Right ventricle myocardium inferior (tissue), 1 donor: ENCODE measurements at regions of chr14 and their contacts with region 1.

Region 1: GRCh38 chr14:103546652-103547454 is 15.6 kb downstream of the BAG5 start:
- DNase-seq: peak; percentile 89
- ATAC-seq: no peak

Region 2: DNA sequence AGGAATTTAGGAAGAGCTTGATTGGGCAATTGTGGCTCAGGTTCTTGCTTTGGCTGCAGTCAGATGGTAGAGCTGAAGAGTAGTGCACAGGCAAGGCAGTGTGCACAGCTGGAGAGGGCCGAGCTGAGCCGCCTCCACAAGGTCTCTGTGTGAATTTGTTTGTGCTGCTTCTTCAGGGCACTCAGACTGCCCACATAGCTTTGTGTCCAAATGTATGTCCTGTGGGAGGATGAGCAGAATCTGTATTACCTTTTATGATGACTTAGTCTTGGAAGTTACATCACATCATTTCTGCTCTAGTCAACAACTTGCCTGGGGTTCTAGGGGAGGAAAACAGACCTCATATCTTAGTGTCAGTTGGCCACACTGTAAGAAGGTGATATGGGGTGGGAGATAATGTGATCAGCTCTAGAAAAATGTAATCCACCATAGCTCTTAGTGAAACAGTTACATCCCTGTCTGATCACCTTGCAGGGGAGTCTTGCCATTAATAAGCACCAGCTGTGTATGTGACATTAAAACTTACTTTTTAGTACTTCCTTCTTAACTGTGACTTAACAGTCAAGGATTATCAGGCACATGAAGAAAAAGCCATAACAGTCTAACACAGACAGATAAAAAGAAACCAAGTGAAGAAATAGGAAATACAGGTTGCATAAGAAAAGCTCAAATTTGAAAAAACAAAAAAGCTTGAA is 901.0 kb before region 1 on chr14:
- intact Hi-C with region 1: no loop called
- DNase-seq: no peak
- ATAC-seq: no peak

Region 3: DNA sequence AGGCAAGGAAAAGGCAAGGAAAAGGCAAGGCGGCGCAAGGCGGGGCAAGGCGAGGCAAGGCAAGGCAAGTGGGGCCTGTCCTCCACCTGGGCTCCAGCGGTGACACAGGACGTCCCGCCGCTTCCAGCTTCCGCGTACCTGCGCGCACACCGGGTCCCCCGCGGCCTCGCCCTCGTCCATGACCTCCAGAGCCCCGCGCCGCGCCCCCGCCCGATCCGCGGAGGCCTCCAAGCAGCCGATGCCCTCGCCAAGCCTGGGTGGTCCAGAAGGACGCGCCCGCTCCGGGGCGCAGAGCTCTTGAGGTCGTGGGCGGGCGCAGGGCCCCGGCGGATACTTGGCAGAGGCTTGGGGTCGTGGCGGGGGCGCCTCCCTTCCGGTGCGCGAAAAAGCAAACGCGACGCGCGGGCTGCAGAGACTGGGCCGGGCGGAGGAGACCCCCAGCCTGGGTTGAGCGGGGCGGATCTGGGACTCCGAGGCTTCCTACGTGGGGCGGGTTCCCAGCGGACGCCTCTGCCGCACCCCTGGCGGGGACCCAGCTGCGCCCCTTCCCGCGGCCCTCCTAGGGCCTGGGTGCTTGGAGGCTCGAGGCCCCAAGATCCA is 273.6 kb before region 1 on chr14:
- intact Hi-C with region 1: no loop called
- DNase-seq: no peak
- ATAC-seq: peak; percentile 46

Region 4: GRCh38 chr14:103500148-103500990 is 46.5 kb before region 1 on chr14:
- intact Hi-C with region 1: loop called (anchors 1 kb)
- DNase-seq: peak; percentile 94
- ATAC-seq: peak; percentile 88

Region 5: GRCh38 chr14:103518422-103519042 is 28.3 kb before region 1 on chr14:
- intact Hi-C with region 1: loop called (anchors 2 kb)
- DNase-seq: peak; percentile 81
- ATAC-seq: peak; percentile 44

Region 6: GRCh38 chr14:103534576-103535061 is 12.2 kb before region 1 on chr14:
- intact Hi-C with region 1: no loop called
- DNase-seq: peak; percentile 64
- ATAC-seq: no peak

Region 7: DNA sequence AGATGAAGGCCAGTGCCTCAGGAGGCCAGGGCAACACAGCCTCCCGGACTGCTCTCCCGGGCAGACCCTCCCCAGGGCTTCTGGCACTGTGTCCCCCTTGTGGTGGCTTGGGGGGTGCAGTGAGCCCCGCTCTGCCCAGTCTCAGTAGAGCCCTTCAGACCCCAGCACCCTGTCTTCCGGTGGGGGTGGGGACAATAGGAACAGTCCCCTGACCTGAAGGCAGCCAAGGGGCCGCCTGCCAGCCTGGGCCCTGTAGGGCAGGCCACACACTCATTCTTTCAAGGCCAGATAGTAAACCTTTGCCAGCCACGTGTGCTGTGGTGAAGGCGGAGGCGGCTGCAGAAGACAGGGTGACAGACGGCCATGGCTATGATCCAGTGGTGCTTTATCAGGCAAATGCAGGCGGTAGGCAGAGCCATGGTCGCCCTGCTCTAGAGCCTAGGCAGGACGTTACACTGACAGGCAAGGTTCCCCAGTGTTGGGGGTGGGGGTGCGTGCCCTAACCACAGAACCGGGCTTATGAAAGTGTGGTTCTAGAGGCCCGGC is 183.7 kb after region 1 on chr14:
- intact Hi-C with region 1: no loop called
- DNase-seq: peak; percentile 78
- ATAC-seq: peak; percentile 85